Mammary epithelial cell (primary cell): ENCODE measurements at regions of chr15 and their contacts with region 1.

Region 1: GRCh38 chr15:67521029-67521811 is at the start of gene C15orf61:
- DNase-seq: peak; percentile 87
- H3K4me3 ChIP-seq: peak within 1 kb of the TSS; percentile 75 to 85 (median 75)
- H3K27ac ChIP-seq: peak within 1 kb of the TSS; percentile 85
- H3K4me1 ChIP-seq: peaks cover 10% of the 10 kb centered on the region
- H3K27me3 ChIP-seq: no peaks in the 10 kb centered on the region
- CTCF ChIP-seq: no peak
- total RNA-seq, gene C15orf61: 6.2 to 6.3 TPM

Region 2: DNA sequence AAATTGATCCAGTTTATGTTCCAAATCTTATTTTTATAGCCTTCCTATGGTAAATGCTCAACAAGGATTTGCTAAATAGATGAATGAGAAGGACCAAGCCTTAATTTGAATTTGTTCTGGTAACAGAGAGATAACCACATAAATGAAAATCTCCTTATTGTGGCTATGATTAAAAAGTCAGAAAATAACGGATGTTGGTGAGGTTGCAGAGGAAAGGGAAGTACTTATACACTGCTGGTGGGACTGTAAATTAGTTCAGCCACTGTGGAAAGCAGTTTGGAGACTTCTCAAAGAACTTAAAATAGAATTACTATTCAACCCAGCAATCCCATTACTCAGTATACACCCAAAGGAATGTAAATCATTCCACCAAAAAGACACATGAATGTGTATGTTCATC is 292.9 kb before region 1 on chr15:
- CTCF ChIA-PET with region 1: no interaction called
- dilution Hi-C with region 1: no loop called
- in situ Hi-C with region 1: no loop called
- intact Hi-C with region 1: no loop called
- DNase-seq: no peak
- H3K4me3 ChIP-seq: no peak overlapping the region
- H3K27ac ChIP-seq: no peak overlapping the region
- H3K4me1 ChIP-seq: peaks cover 33% of the 10 kb centered on the region
- H3K27me3 ChIP-seq: no peaks in the 10 kb centered on the region
- CTCF ChIP-seq: no peak

Region 3: GRCh38 chr15:67456677-67457529 is 64.3 kb before region 1 on chr15:
- CTCF ChIA-PET with region 1: no interaction called
- dilution Hi-C with region 1: no loop called
- in situ Hi-C with region 1: no loop called
- intact Hi-C with region 1: loop called (anchors 5 kb)
- DNase-seq: peak; percentile 46
- H3K4me3 ChIP-seq: no peak overlapping the region
- H3K27ac ChIP-seq: no peak overlapping the region
- H3K4me1 ChIP-seq: no peaks in the 10 kb centered on the region
- H3K27me3 ChIP-seq: no peaks in the 10 kb centered on the region
- CTCF ChIP-seq: peak; percentile 89 to 93

Region 4: GRCh38 chr15:67531379-67532059 is 10.3 kb after region 1 on chr15:
- CTCF ChIA-PET with region 1: no interaction called
- dilution Hi-C with region 1: no loop called
- in situ Hi-C with region 1: no loop called
- intact Hi-C with region 1: loop called (anchors 1 kb)
- DNase-seq: peak; percentile 87
- H3K4me3 ChIP-seq: no peak overlapping the region
- H3K27ac ChIP-seq: peak overlapping the region; percentile 50
- H3K4me1 ChIP-seq: peaks cover 12% of the 10 kb centered on the region
- H3K27me3 ChIP-seq: no peaks in the 10 kb centered on the region
- CTCF ChIP-seq: no peak